ENCODE measurements at regions of chrX and their contacts with region 1.

Region 1: DNA sequence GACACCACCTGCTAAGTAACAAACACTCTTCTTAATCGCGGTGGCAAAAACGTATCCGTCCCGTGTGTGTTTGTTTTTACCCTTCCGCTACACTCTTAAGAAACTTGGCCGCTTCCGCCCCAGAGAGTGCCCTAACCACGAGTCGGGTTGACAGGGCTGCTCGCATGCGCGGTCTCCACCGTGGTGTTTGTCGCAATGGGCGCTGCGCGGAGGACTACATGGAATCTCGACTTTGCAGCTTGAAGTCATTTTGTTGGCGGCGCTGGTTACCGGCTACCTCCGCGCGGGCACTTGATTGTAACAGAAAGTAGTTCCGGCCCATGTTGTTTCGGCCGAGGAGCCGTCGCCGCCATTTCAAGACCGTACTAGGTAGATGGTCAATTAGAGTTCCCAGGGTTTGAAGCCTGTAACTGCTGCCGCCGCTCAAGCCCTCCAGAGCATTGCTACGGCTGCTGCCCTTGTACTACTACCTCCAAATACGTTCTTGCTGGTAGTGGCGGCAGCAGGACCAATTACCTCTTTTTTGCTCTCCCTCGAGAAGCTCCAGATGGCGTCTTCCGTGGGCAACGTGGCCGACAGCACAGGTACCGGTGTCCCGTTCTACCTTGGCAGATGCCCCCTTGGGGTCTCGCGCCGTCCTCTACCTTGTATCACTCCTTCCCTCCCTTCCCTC is at the start of gene OGT:
- DNase-seq: peak; percentile 77 to 95 (median 92)
- ATAC-seq: peak; percentile 91
- H3K4me3 ChIP-seq: peak within 1 kb of the TSS; percentile 96
- H3K4me3 Mint-ChIP-seq: peak within 1 kb of the TSS; percentile 76 to 100 (median 98)
- H3K27ac ChIP-seq: peak within 1 kb of the TSS; percentile 91
- H3K27ac Mint-ChIP-seq: peak within 1 kb of the TSS; percentile 92 to 99 (median 99)
- H3K4me1 ChIP-seq: peaks cover 12 to 16% of the 10 kb centered on the region in 2 donors
- H3K4me1 Mint-ChIP-seq: peaks cover 4 to 35% (median 31%) of the 10 kb centered on the region in 7 donors
- H3K27me3 ChIP-seq: no peaks in the 10 kb centered on the region
- H3K27me3 Mint-ChIP-seq: no peaks in the 10 kb centered on the region
- total RNA-seq, gene OGT: 313 to 520 (median 424) TPM

Region 2: DNA sequence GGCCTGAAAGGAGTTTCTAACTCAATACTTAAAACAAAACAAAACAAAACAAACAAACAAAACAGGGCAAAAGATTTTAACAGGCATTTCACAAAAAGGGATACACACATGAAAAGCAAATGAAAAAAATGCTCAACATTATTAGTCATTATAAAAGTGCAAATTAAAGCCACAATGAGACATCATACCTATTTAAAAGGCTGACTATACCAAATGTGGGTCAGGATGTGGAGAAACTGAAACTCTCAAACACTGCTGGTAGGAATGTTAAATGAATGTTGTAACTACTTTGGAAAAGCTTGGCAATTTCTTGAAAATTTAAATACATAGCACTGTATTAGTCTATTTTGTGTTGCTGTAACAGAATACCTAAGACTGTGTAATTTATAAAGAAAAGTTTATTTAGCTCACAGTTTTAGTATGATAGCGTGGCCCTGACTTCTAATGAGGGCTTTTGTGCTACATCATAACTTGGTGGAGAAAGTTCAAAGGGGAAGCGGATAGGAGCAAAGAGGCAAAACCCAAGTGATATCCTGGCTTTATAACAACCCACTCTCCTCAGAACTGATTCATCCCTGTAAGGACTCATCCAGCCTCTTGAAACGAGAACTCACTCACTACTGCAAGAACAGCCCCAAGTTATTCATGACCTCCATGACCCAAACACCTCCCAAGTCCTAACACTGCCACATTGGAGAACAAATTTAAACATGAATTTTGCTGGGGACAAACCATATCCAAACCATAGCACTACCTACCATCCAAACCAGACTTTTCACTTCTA is 838.4 kb before region 1 on chrX:
- CTCF ChIA-PET with region 1: no interaction called
- POLR2A ChIA-PET with region 1: no interaction called
- intact Hi-C with region 1: no loop called
- DNase-seq: no peak
- ATAC-seq: no peak
- H3K4me3 ChIP-seq: no peak overlapping the region
- H3K4me3 Mint-ChIP-seq: no peak overlapping the region
- H3K27ac ChIP-seq: no peak overlapping the region
- H3K27ac Mint-ChIP-seq: no peak overlapping the region
- H3K4me1 ChIP-seq: no peaks in the 10 kb centered on the region
- H3K4me1 Mint-ChIP-seq: no peaks in the 10 kb centered on the region
- H3K27me3 ChIP-seq: no peaks in the 10 kb centered on the region
- H3K27me3 Mint-ChIP-seq: no peaks in the 10 kb centered on the region

Region 3: DNA sequence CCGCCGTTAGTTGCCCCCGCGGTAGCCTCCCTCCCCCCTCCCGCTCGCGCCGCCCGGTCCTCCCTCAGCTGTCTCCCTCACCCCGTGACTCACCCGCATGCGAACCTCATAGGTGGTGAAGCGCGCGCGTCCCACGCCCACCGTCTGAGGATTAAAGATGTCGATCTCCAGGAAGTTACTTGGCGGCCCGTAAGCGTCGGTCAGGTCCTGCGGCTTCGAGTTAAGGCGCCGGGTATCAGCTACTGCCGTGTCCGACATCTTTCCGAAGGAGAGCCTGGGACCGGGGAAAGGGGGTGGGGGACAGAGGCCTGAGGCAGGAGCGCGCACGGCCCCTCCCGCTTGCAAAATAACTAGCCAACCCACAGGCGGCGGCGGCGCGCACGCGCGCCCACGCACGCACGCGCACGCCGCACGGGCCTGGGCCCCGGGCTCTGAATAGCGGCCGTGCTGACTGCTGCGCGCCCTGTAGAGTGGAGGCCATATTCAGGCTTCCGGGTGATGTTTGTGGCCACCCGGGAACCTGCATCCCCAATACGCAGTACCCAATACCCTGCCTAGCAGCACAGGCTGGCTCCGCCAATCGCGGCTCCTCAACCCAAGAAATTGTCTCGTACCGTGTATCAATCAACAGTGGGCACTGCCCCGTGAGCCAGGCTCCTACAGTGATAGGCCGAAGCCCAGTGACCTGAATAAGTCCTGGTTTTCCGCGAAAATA is 464.7 kb before region 1 on chrX and contains the start of gene SNX12:
- CTCF ChIA-PET with region 1: no interaction called
- POLR2A ChIA-PET with region 1: no interaction called
- intact Hi-C with region 1: loop called (anchors 1 kb)
- DNase-seq: peak; percentile 66 to 93 (median 88)
- ATAC-seq: peak; percentile 99
- H3K4me3 ChIP-seq: peak within 1 kb of the TSS; percentile 81
- H3K4me3 Mint-ChIP-seq: peak within 1 kb of the TSS; percentile 76 to 98 (median 94)
- H3K27ac ChIP-seq: peak within 1 kb of the TSS; percentile 86
- H3K27ac Mint-ChIP-seq: peak within 1 kb of the TSS; percentile 90 to 98 (median 97)
- H3K4me1 ChIP-seq: peaks cover 0 to 4% of the 10 kb centered on the region in 2 donors
- H3K4me1 Mint-ChIP-seq: peaks cover 9 to 24% (median 18%) of the 10 kb centered on the region in 7 donors
- H3K27me3 ChIP-seq: no peaks in the 10 kb centered on the region
- H3K27me3 Mint-ChIP-seq: peaks cover 0 to 12% (median 0%) of the 10 kb centered on the region in 5 donors
- total RNA-seq, gene SNX12: 19.0 to 41.6 (median 37.3) TPM

Region 4: DNA sequence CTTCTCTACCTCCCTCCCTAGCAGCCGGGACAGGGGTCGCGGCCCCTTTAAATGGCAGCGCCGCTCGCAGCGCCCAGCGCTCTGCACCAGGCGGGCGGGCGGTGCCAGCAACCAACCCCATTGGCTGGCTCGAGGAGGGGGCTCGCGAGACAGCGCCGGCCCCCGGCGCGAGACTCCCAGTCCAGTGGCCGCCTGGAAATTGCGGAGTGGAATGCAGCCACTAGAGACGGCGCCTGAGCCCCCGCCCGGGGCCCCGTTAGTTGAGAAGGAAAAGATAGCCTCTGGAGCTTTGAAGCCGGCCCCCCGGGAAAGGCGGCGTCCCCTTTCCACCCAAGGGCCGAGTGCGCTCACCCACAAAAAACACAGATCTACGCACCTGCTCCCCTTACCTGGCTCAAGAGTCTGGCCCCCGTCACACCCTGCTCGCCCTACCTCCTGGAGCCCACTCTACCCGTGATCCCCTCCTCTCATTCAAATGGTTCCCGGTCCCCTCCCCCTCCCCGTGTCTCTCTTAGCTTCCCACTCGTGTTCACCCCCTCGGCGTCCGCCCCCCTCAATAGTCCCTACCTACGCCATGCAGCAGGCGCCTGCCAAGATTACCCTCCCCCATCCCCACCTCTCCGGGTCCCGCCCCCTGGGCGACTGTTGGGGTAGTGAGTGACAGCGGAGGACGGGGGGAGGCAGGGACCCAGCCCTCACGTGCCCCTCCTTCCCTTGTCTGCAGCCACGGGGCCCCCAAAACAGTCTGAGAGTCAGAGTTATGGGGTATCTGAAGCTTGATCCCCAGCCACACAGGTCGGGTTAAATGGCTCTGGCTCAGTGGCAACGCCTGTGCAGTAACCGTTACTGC is 278.6 kb before region 1 on chrX and contains the start of gene ZMYM3:
- CTCF ChIA-PET with region 1: no interaction called
- POLR2A ChIA-PET with region 1: interaction called, 9 read pairs
- intact Hi-C with region 1: loop called in 1 of 2 experiments (anchors 2 kb)
- DNase-seq: peak; percentile 46 to 87 (median 78)
- ATAC-seq: peak; percentile 89
- H3K4me3 ChIP-seq: peak within 1 kb of the TSS; percentile 79
- H3K4me3 Mint-ChIP-seq: peak within 1 kb of the TSS; percentile 76 to 97 (median 90)
- H3K27ac ChIP-seq: peak within 1 kb of the TSS; percentile 91
- H3K27ac Mint-ChIP-seq: peak within 1 kb of the TSS; percentile 87 to 96 (median 91)
- H3K4me1 ChIP-seq: peaks cover 0 to 20% of the 10 kb centered on the region in 2 donors
- H3K4me1 Mint-ChIP-seq: peaks cover 0 to 30% (median 18%) of the 10 kb centered on the region in 7 donors
- H3K27me3 ChIP-seq: no peaks in the 10 kb centered on the region
- H3K27me3 Mint-ChIP-seq: no peaks in the 10 kb centered on the region
- total RNA-seq, gene ZMYM3: 21.2 to 34.1 (median 21.6) TPM

Region 5: DNA sequence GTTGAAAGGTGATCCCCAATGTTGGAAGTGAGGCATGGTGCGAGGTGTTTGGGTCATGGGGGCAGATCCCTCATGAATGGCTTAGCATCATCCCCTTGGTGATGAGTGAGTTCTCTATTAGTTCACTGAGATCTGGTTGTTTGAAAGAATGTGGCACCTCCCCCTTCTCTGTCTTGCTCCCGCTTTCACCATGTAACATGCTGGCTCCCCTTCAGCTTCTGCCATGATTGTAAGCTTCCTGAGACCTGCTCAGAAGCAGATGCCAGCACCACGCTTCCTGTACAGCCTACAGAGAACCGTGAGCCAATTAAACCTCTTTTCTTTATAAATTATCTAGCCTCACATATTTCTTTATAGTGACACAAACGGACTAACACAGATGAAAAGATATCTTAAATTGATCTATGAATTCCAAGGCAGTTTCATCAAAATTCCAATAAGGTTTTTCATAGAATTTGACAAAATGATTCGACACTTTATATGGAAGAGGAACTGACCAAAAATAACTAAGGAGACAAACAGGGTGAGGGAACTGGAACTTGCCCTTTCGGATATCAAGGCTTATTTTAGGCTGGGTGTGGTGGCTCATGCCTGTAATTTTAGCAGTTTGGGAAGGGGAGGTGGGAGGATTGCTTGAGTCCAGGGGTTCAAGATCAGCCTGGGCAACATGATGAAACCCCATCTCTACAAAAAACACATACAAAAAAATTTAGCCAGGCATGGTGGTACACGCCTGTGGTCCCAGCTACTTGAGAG is 56.9 kb before region 1 on chrX:
- CTCF ChIA-PET with region 1: no interaction called
- POLR2A ChIA-PET with region 1: interaction called, 3 read pairs
- intact Hi-C with region 1: loop called in 1 of 2 experiments (anchors 10 kb)
- DNase-seq: no peak
- ATAC-seq: no peak
- H3K4me3 ChIP-seq: no peak overlapping the region
- H3K4me3 Mint-ChIP-seq: no peak overlapping the region
- H3K27ac ChIP-seq: no peak overlapping the region
- H3K27ac Mint-ChIP-seq: no peak overlapping the region
- H3K4me1 ChIP-seq: no peaks in the 10 kb centered on the region
- H3K4me1 Mint-ChIP-seq: peaks cover 0 to 4% (median 0%) of the 10 kb centered on the region in 7 donors
- H3K27me3 ChIP-seq: no peaks in the 10 kb centered on the region
- H3K27me3 Mint-ChIP-seq: no peaks in the 10 kb centered on the region

Region 6: GRCh38 chrX:71550578-71550977 is 17.7 kb after region 1 on chrX:
- CTCF ChIA-PET with region 1: no interaction called
- POLR2A ChIA-PET with region 1: interaction called, 49 read pairs
- intact Hi-C with region 1: loop called in 1 of 2 experiments (anchors 2 kb)
- DNase-seq: no peak
- ATAC-seq: no peak
- H3K4me3 ChIP-seq: no peak overlapping the region
- H3K4me3 Mint-ChIP-seq: no peak overlapping the region
- H3K27ac ChIP-seq: no peak overlapping the region
- H3K27ac Mint-ChIP-seq: no peak overlapping the region
- H3K4me1 ChIP-seq: peaks cover 0 to 7% of the 10 kb centered on the region in 2 donors
- H3K4me1 Mint-ChIP-seq: peaks cover 3 to 25% (median 12%) of the 10 kb centered on the region in 7 donors
- H3K27me3 ChIP-seq: no peaks in the 10 kb centered on the region
- H3K27me3 Mint-ChIP-seq: no peaks in the 10 kb centered on the region

Region 7: DNA sequence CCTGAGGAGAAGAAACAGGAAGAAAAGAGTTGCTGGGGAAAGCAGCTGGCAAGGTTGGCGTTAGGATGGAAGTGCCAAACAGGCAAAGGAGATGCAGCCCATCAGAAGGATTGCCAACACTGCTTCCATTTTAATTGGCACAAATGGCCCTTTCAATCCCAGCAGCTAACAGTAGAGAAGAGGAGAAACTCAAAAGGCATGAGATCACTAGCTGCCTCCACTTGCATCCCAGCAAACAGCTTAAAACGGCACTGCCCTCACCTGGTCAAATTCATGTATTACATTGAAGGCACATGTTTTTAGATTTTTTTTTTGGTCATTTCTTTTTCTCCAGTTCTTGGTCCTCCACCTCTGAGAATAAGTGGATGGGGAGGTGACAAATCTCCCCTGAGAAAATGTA is 119.5 kb after region 1 on chrX:
- CTCF ChIA-PET with region 1: no interaction called
- POLR2A ChIA-PET with region 1: no interaction called
- intact Hi-C with region 1: loop called in 1 of 2 experiments (anchors 2 kb)
- DNase-seq: peak in 7 of 9 donors; percentile 19 to 59 (median 48)
- ATAC-seq: peak; percentile 75
- H3K4me3 ChIP-seq: no peak overlapping the region
- H3K4me3 Mint-ChIP-seq: no peak overlapping the region
- H3K27ac ChIP-seq: no peak overlapping the region
- H3K27ac Mint-ChIP-seq: peak overlapping the region in 1 of 9 donors; percentile 25
- H3K4me1 ChIP-seq: peaks cover 0 to 5% of the 10 kb centered on the region in 2 donors
- H3K4me1 Mint-ChIP-seq: peaks cover 0 to 26% (median 0%) of the 10 kb centered on the region in 7 donors
- H3K27me3 ChIP-seq: no peaks in the 10 kb centered on the region
- H3K27me3 Mint-ChIP-seq: peaks cover 0 to 12% (median 0%) of the 10 kb centered on the region in 5 donors